Prostate gland (tissue), 2 donors: ENCODE measurements at regions of chrX and their contacts with region 1.

Region 1: GRCh38 chrX:103214870-103215424 is at the start of gene BEX4:
- DNase-seq: peak; percentile 82
- H3K4me3 ChIP-seq: peak within 1 kb of the TSS; percentile 66 to 73
- H3K27ac ChIP-seq: peak within 1 kb of the TSS; percentile 85 to 87
- H3K4me1 ChIP-seq: no peaks in the 10 kb centered on the region
- H3K27me3 ChIP-seq: no peaks in the 10 kb centered on the region
- CTCF ChIP-seq: no peak
- POLR2A ChIP-seq: peak; percentile 90
- total RNA-seq, gene BEX4: 60.6 to 116 TPM

Region 2: DNA sequence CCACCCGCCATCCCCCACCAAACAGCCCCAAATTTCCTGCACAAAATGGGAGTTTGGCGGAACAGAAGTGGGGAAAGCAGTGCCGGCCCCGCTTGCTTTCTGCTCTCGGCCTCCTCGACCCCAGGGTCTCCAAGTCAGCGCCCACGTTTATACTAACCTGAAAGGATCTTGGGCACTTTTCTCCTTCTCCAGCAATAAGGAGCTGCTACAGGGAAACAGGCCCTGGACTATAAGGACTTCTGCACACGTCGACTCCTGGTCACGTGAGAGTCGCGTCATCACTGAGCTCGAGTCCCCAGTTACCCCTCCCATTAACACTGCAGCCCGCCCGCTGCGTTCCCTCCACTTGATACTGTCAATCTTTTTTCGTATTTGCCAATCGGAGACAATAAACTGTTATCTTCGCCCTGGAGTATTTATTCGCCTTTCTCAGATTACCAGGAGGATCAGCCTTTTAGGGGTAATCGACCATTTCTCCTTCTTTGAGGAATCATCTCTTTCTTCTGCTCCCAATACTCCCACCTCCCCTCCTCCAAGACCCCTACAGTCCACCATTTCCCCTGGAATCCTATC is 40.1 kb after region 1 on chrX and contains the start of gene TCEAL8:
- intact Hi-C with region 1: loop called (anchors 5 kb)
- DNase-seq: peak; percentile 81
- H3K4me3 ChIP-seq: peak within 1 kb of the TSS; percentile 45 to 47
- H3K27ac ChIP-seq: peak within 1 kb of the TSS; percentile 83 to 88
- H3K4me1 ChIP-seq: no peaks in the 10 kb centered on the region
- H3K27me3 ChIP-seq: no peaks in the 10 kb centered on the region
- CTCF ChIP-seq: no peak
- POLR2A ChIP-seq: peak; percentile 62
- total RNA-seq, gene TCEAL8: 59.4 to 90.0 TPM

Region 3: GRCh38 chrX:103310542-103311398 is 95.8 kb after region 1 on chrX and contains the start of gene BEX2:
- intact Hi-C with region 1: no loop called
- DNase-seq: peak; percentile 85
- H3K4me3 ChIP-seq: peak within 1 kb of the TSS; percentile 46 to 55
- H3K27ac ChIP-seq: peak within 1 kb of the TSS; percentile 53 to 64
- H3K4me1 ChIP-seq: no peaks in the 10 kb centered on the region
- H3K27me3 ChIP-seq: no peaks in the 10 kb centered on the region
- CTCF ChIP-seq: no peak
- POLR2A ChIP-seq: peak; percentile 76
- total RNA-seq, gene BEX2: 41.2 to 79.0 TPM

Region 4: DNA sequence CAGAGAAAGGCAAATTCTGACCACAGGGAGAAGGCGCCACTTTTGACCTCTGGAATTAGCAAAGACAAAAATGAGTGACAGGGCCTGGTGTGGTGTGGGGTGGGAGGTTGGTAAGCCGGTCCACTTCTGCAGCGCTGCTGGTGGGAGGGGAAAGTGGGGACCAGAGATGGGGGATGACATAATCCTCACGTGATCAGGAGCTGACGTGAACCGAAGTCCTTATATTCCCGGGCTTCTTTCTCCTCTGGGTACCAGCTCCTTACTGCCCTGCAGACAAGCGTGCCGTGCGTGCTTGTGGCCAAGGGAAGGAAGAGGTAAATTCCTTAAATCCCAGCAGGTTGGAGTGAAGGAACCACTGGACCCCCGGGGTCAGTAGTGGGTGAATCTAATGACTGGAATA is 115.0 kb after region 1 on chrX and contains the start of gene TCEAL7:
- intact Hi-C with region 1: loop called (anchors 10 kb)
- DNase-seq: no peak
- H3K4me3 ChIP-seq: peak within 1 kb of the TSS in 1 of 2 donors; percentile 10
- H3K27ac ChIP-seq: no peak within 1 kb of the TSS
- H3K4me1 ChIP-seq: no peaks in the 10 kb centered on the region
- H3K27me3 ChIP-seq: no peaks in the 10 kb centered on the region
- CTCF ChIP-seq: no peak
- POLR2A ChIP-seq: no peak
- total RNA-seq, gene TCEAL7: 1.4 to 6.2 TPM

Region 5: DNA sequence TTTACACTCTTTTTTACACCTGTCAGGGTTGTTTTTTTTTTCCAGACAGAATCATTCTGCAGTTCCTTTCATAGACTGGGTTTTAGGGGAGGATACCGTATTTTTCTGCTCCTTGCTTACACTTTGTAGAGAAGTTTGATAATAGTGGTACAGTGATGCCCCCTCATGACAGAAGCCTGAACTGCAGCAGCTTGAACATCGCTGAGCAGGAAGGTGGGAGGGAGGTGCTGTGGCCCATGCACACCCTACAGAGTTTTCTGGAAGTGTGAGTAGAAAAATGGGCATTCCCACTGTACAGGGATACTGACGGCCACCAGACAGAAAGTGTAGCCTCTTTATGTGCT is 249.8 kb after region 1 on chrX:
- intact Hi-C with region 1: loop called (anchors 5 kb)
- DNase-seq: peak; percentile 57
- H3K4me3 ChIP-seq: peak overlapping the region in 1 of 2 donors; percentile 9
- H3K27ac ChIP-seq: no peak overlapping the region
- H3K4me1 ChIP-seq: no peaks in the 10 kb centered on the region
- H3K27me3 ChIP-seq: no peaks in the 10 kb centered on the region
- CTCF ChIP-seq: peak; percentile 31 to 78 (median 59)
- POLR2A ChIP-seq: no peak